Astrocyte of the cerebellum (primary cell): ENCODE measurements at regions of chr22 and their contacts with region 1.

Region 1: GRCh38 chr22:23187871-23188700 is 7.8 kb downstream of the BCR start:
- DNase-seq: no peak
- H3K4me3 ChIP-seq: no peak overlapping the region
- CTCF ChIP-seq: no peak

Region 2: GRCh38 chr22:23278883-23279675 is 91.0 kb after region 1 on chr22:
- in situ Hi-C with region 1: loop called (anchors 5 kb)
- DNase-seq: no peak
- H3K4me3 ChIP-seq: no peak overlapping the region
- CTCF ChIP-seq: no peak